ENCODE measurements at regions of chr2 and their contacts with region 1.

Region 1: DNA sequence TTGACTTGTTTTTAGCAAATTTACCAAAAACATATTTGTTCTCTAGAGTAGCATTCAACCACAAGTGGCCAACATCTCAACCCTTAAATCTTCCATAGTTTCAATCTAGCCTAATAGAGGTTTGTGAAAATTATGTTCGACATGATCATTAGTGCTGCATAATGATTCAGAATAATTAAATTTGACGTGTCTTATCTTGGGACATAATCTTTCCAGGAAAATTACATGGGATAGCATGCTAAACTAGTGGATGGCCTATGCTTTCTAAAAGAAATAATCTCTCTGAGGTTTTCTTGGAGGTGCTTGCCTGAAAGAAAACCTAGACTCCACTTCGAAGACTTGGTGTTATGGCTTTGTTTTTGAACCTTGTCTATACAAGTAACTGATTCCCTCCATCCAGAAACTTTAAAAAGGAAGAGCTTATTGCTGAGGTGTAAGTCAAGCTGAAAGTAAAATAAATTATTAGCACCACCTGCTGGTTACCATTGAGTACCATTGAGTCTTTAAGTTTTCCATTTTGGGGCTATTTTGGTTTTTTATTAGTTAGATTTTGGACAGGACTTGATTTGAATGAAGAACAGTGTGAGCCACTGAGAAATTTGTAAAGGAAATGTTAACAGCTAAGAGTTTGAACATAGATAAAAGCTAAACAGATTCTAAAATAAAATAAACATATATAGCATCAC is 32.7 kb downstream of the COX7A2L start:
- DNase-seq: no peak
- H3K4me3 ChIP-seq: no peak overlapping the region
- H3K4me3 Mint-ChIP-seq: no peak overlapping the region
- H3K27ac Mint-ChIP-seq: no peak overlapping the region
- H3K4me1 ChIP-seq: no peaks in the 10 kb centered on the region
- H3K4me1 Mint-ChIP-seq: no peaks in the 10 kb centered on the region
- H3K27me3 ChIP-seq: no peaks in the 10 kb centered on the region
- H3K27me3 Mint-ChIP-seq: no peaks in the 10 kb centered on the region
- CTCF ChIP-seq: peak in 1 of 2 experiments; percentile 21

Region 2: GRCh38 chr2:41853427-41854216 is 474.7 kb before region 1 on chr2:
- CTCF ChIA-PET with region 1: interaction called, 7 read pairs
- POLR2A ChIA-PET with region 1: no interaction called
- intact Hi-C with region 1: loop called (anchors 1 kb)
- DNase-seq: peak; percentile 70 to 78
- H3K4me3 ChIP-seq: no peak overlapping the region
- H3K4me3 Mint-ChIP-seq: no peak overlapping the region
- H3K27ac Mint-ChIP-seq: peak overlapping the region; percentile 8
- H3K4me1 ChIP-seq: peaks cover 15% of the 10 kb centered on the region
- H3K4me1 Mint-ChIP-seq: peaks cover 2% of the 10 kb centered on the region
- H3K27me3 ChIP-seq: no peaks in the 10 kb centered on the region
- H3K27me3 Mint-ChIP-seq: no peaks in the 10 kb centered on the region
- CTCF ChIP-seq: peak; percentile 82 to 94

Region 3: GRCh38 chr2:41869542-41870264 is 458.6 kb before region 1 on chr2:
- CTCF ChIA-PET with region 1: no interaction called
- POLR2A ChIA-PET with region 1: no interaction called
- intact Hi-C with region 1: no loop called
- DNase-seq: peak; percentile 81 to 87
- H3K4me3 ChIP-seq: no peak overlapping the region
- H3K4me3 Mint-ChIP-seq: no peak overlapping the region
- H3K27ac Mint-ChIP-seq: peak overlapping the region; percentile 68
- H3K4me1 ChIP-seq: peaks cover 71% of the 10 kb centered on the region
- H3K4me1 Mint-ChIP-seq: peaks cover 71% of the 10 kb centered on the region
- H3K27me3 ChIP-seq: no peaks in the 10 kb centered on the region
- H3K27me3 Mint-ChIP-seq: no peaks in the 10 kb centered on the region
- CTCF ChIP-seq: peak; percentile 85 to 96

Region 4: DNA sequence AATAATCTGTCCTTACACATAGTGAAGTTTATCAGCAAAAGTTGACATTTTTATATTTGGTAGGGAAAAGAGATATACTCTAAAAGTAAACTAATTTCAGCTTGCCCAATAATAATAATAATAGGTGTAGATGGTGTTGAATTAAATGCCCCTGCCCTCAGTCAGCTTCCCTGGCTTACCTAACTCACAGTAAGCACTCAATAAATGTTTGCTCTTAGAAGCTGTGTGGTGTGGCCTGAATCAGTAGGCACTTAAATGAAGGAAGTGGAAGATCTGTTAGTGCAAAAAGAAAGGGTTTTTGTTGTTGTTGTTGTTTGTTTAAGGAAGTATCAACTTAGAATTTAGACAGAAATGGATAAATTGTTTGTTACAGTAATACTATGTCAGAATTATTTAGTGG is 123.0 kb before region 1 on chr2:
- CTCF ChIA-PET with region 1: no interaction called
- POLR2A ChIA-PET with region 1: no interaction called
- intact Hi-C with region 1: no loop called
- DNase-seq: no peak
- H3K4me3 ChIP-seq: no peak overlapping the region
- H3K4me3 Mint-ChIP-seq: no peak overlapping the region
- H3K27ac Mint-ChIP-seq: no peak overlapping the region
- H3K4me1 ChIP-seq: no peaks in the 10 kb centered on the region
- H3K4me1 Mint-ChIP-seq: peaks cover 5% of the 10 kb centered on the region
- H3K27me3 ChIP-seq: no peaks in the 10 kb centered on the region
- H3K27me3 Mint-ChIP-seq: no peaks in the 10 kb centered on the region
- CTCF ChIP-seq: no peak

Region 5: DNA sequence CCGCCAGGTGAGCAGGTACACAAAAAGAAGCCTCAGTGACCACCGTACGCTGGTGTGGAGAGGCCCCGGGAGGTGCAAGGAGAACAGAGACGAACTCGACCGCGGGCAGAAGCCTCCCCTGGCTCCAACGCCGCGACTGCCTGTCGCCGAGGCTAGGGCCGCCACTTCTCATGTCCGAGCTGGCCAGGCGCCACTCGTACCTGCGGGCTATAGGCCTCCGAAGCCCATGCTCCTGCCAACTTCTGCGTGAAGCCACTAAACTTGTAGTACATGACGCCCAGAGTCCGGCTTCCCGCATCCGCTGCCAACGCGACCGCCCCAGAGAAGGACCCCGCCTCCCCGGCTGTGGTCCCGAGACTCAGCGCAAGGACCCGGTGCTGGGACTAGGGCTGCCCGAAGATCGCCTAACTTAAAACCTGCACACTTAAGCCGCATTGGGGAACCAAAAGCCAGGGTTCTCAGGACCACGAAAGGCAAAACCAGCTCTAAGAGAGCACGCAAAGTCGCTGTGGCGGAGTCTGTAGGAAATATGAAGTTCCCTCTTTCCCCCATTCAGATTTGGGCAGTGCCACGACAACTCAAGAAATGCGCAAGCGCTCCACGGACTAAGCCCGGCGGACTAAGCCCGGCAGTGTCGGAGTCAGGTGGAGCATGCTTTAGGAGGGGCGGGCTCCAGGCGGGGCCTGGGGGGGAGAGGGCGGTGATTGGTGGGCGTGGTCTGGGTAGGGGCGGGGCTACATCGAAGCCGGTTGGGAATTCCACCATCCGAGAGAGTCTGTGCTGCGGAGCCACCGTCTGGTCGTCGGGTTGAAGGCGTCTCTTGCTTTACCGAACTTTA is 32.8 kb after region 1 on chr2 and contains the start of gene COX7A2L:
- CTCF ChIA-PET with region 1: no interaction called
- POLR2A ChIA-PET with region 1: no interaction called
- intact Hi-C with region 1: loop called (anchors 2 kb)
- DNase-seq: peak; percentile 98
- H3K4me3 ChIP-seq: peak within 1 kb of the TSS; percentile 91
- H3K4me3 Mint-ChIP-seq: peak within 1 kb of the TSS; percentile 89
- H3K27ac Mint-ChIP-seq: peak within 1 kb of the TSS; percentile 97
- H3K4me1 ChIP-seq: peaks cover 8% of the 10 kb centered on the region; the same call in 1 of the 2 replicates
- H3K4me1 Mint-ChIP-seq: peaks cover 15% of the 10 kb centered on the region
- H3K27me3 ChIP-seq: no peaks in the 10 kb centered on the region
- H3K27me3 Mint-ChIP-seq: no peaks in the 10 kb centered on the region
- CTCF ChIP-seq: peak in 1 of 2 experiments; percentile 39
- total RNA-seq, gene COX7A2L: 117 and 125 TPM in 2 replicates

Measured in Caco-2 (cell line).